Heart left ventricle (tissue), 16 donors: ENCODE measurements at regions of chr12 and their contacts with region 1.

Region 1: GRCh38 chr12:97308576-97309198 is 153.9 kb upstream of the RMST start:
- DNase-seq: no peak
- ATAC-seq: no peak
- H3K4me3 ChIP-seq: no peak overlapping the region
- H3K27ac ChIP-seq: no peak overlapping the region
- H3K4me1 ChIP-seq: peaks cover 0 to 10% (median 0%) of the 10 kb centered on the region in 12 donors
- H3K27me3 ChIP-seq: peaks cover 0 to 6% (median 0%) of the 10 kb centered on the region in 9 donors
- CTCF ChIP-seq: peak; percentile 50 to 81 (median 73)
- POLR2A ChIP-seq: no peak

Region 2: DNA sequence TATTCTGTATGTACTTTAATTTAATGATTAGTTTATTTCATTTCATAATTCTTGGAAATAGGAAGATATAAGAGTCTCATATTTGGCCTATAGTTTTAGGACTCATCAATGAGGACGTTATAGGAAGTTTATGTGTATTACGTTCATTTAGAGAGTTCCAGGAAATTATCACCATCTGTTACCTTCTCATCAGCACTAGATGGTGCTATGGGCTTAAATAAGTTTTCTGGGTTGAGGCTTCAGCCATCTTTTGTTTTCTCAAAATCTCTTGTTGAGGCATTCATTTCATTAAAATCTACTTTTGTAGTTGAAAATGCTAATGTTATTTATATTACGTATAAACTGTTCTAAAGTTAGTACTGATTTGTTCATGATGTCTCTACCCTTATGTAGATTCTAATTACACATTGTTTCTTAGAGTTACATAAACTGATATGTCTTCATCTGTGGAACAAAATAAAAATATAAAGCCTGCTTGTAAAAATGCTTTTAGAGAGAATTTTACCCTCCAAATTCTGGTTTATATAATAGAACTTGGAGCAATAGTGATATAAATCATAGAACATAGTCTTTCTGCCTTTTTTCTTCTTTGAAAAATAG is 730.1 kb before region 1 on chr12:
- intact Hi-C with region 1: loop called in 8 of 10 experiments (anchors 2 to 10 kb)
- DNase-seq: no peak
- ATAC-seq: peak in 3 of 4 donors; percentile 48 to 63 (median 48)
- H3K4me3 ChIP-seq: no peak overlapping the region
- H3K27ac ChIP-seq: no peak overlapping the region
- H3K4me1 ChIP-seq: no peaks in the 10 kb centered on the region
- H3K27me3 ChIP-seq: no peaks in the 10 kb centered on the region
- CTCF ChIP-seq: peak; percentile 43 to 72 (median 60)
- POLR2A ChIP-seq: no peak

Region 3: GRCh38 chr12:97148941-97149559 is 159.6 kb before region 1 on chr12:
- intact Hi-C with region 1: loop called in 9 of 10 experiments (anchors 1 to 10 kb)
- DNase-seq: peak; percentile 24 to 64 (median 36)
- ATAC-seq: peak; percentile 77 to 94 (median 91)
- H3K4me3 ChIP-seq: no peak overlapping the region
- H3K27ac ChIP-seq: no peak overlapping the region
- H3K4me1 ChIP-seq: no peaks in the 10 kb centered on the region
- H3K27me3 ChIP-seq: no peaks in the 10 kb centered on the region
- CTCF ChIP-seq: peak; percentile 40 to 79 (median 66)
- POLR2A ChIP-seq: no peak